ENCODE measurements at regions of chr2 and their contacts with region 1.

Region 1: DNA sequence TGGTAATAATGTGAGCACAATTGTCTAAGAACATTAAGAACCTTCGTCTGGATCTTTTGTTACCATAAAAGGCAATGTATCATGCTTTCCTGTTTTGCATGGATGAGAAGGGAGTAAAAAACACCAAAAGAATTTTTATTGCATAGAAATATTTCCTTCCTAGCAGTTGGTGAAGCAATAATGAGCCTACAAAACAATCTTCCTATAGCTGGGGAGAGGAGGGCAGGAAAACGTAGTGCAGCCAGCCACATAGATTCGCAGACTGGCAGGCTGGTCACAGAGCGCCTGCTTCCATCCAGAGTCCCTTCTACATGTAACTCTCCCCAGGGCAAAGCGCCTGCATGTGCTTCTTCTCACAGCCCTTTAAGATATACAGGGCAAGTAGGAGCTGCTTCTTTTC is 190.4 kb downstream of the BABAM2 start:
- DNase-seq: peak; percentile 93
- H3K4me3 ChIP-seq: peak overlapping the region in 1 of 3 experiments; percentile 1
- H3K27ac ChIP-seq: peak overlapping the region; percentile 88
- H3K4me1 ChIP-seq: peaks cover 31% of the 10 kb centered on the region
- H3K27me3 ChIP-seq: no peaks in the 10 kb centered on the region
- CTCF ChIP-seq: no peak
- POLR2A ChIP-seq: peak; percentile 73

Region 2: GRCh38 chr2:27798948-27799645 is 281.8 kb before region 1 on chr2:
- CTCF ChIA-PET with region 1: interaction called, 6 read pairs
- POLR2A ChIA-PET with region 1: no interaction called
- dilution Hi-C with region 1: no loop called
- intact Hi-C with region 1: loop called (anchors 2 kb)
- DNase-seq: peak; percentile 93
- H3K4me3 ChIP-seq: no peak overlapping the region
- H3K27ac ChIP-seq: peak overlapping the region; percentile 94
- H3K4me1 ChIP-seq: peaks cover 34% of the 10 kb centered on the region
- H3K27me3 ChIP-seq: no peaks in the 10 kb centered on the region
- CTCF ChIP-seq: no peak
- POLR2A ChIP-seq: no peak

Region 3: GRCh38 chr2:27920148-27920885 is 160.6 kb before region 1 on chr2:
- CTCF ChIA-PET with region 1: no interaction called
- POLR2A ChIA-PET with region 1: no interaction called
- dilution Hi-C with region 1: no loop called
- intact Hi-C with region 1: loop called (anchors 1 kb)
- DNase-seq: peak; percentile 95
- H3K4me3 ChIP-seq: peak overlapping the region in 1 of 3 experiments; percentile 14
- H3K27ac ChIP-seq: peak overlapping the region; percentile 96
- H3K4me1 ChIP-seq: peaks cover 17% of the 10 kb centered on the region
- H3K27me3 ChIP-seq: no peaks in the 10 kb centered on the region
- CTCF ChIP-seq: no peak
- POLR2A ChIP-seq: no peak

Region 4: DNA sequence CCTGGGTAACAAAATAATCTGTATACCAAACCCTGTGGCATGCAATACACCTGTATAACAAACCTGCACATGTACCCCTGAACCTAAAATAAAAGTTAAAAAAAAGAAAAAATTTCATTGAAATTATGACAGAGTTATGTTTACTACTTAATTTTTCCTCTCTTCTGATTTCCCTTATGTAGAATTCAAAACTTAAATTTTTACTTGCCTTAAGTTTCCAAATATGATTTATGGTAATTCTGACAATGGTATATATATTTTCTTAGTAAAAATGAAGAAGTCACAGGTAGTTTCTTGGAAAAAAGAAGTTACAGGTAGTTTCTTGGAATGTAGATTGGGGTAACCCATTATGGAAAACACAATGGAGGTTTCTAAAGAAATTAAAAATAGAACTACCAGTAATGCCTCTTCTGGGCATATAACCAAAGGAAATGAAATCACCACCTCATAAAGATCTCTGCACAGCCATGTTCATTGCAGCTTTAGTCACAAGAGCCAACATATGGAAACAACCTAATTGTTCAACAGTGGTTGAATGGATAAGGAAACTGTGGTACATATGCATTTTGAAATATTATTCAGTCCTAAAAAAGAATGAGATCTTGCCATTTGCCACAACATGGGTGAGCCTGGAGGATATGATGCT is 25.5 kb before region 1 on chr2:
- CTCF ChIA-PET with region 1: interaction called, 5 read pairs
- POLR2A ChIA-PET with region 1: no interaction called
- dilution Hi-C with region 1: no loop called
- intact Hi-C with region 1: loop called (anchors 2 kb)
- DNase-seq: peak; percentile 47
- H3K4me3 ChIP-seq: no peak overlapping the region
- H3K27ac ChIP-seq: no peak overlapping the region
- H3K4me1 ChIP-seq: peaks cover 21% of the 10 kb centered on the region
- H3K27me3 ChIP-seq: no peaks in the 10 kb centered on the region
- CTCF ChIP-seq: no peak
- POLR2A ChIP-seq: no peak

Region 5: GRCh38 chr2:28102455-28102874 is 21.6 kb after region 1 on chr2:
- CTCF ChIA-PET with region 1: interaction called, 5 read pairs
- POLR2A ChIA-PET with region 1: no interaction called
- dilution Hi-C with region 1: no loop called
- intact Hi-C with region 1: loop called (anchors 2 kb)
- DNase-seq: peak; percentile 91
- H3K4me3 ChIP-seq: peak overlapping the region in 1 of 3 experiments; percentile 29
- H3K27ac ChIP-seq: peak overlapping the region; percentile 63
- H3K4me1 ChIP-seq: peaks cover 23% of the 10 kb centered on the region
- H3K27me3 ChIP-seq: no peaks in the 10 kb centered on the region
- CTCF ChIP-seq: no peak
- POLR2A ChIP-seq: peak; percentile 48